CD8-positive, alpha-beta T cell (primary cell): ENCODE measurements at regions of chr1 and their contacts with region 1.

Region 1: DNA sequence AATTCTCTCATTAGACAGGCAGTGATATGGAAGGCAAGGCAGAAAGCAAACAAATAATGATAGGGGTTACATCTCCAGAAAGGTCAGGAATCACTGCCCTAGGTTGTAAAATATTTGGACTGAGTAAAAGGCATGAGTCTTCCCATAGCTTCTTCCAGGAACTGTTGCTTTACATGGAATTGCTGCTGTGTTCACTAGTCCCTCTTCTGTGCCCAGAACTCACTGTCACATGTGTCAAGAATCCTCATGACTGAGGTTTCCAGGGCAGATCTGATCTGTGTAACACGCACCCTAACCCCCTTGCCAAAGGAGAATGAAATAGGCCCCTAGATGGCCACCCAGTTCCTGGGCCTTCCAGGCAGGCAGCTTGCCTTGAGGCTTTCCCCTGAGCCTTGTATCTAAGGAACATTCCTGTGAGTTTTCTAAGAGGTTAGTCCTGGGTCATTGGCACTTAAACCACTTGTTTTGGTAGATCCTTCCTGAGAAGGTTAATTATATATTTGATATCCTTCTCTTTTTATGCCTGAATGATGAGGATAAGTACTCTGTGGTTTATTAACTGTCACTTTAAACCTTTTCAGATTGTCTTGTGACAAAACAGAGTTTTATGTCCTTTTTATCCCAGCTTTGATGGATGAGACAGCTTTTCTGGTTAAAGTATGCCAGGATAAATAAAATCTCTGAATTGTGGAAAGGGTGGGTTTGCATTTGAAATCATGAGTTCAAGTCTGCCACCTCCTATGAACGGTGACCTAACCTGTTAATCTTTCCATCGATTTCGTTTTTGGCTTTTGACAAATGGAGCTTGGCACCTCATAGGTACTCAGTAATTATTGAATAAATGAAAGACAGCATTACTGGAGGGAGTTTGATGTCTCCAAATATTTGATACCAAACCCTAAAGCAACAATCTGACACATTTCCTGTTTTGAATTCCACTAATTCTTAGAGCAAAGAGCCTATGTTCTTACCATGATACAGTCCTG is 163.3 kb downstream of the DHRS3 start:
- DNase-seq: no peak
- ATAC-seq: no peak
- H3K4me3 ChIP-seq: no peak overlapping the region
- H3K4me3 Mint-ChIP-seq: peak overlapping the region; percentile 19
- H3K27ac ChIP-seq: no peak overlapping the region
- H3K27ac Mint-ChIP-seq: peak overlapping the region; percentile 90
- H3K4me1 ChIP-seq: peaks cover 88% of the 10 kb centered on the region
- H3K4me1 Mint-ChIP-seq: peaks cover 86% of the 10 kb centered on the region
- H3K27me3 ChIP-seq: no peaks in the 10 kb centered on the region
- H3K27me3 Mint-ChIP-seq: no peaks in the 10 kb centered on the region
- CTCF ChIP-seq: no peak

Region 2: GRCh38 chr1:12415038-12415466 is 39.6 kb before region 1 on chr1:
- CTCF ChIA-PET with region 1: no interaction called
- POLR2A ChIA-PET with region 1: no interaction called
- intact Hi-C with region 1: loop called in 1 of 2 experiments (anchors 5 kb)
- DNase-seq: peak in 1 of 9 experiments; percentile 14
- ATAC-seq: no peak
- H3K4me3 ChIP-seq: no peak overlapping the region
- H3K4me3 Mint-ChIP-seq: no peak overlapping the region
- H3K27ac ChIP-seq: no peak overlapping the region
- H3K27ac Mint-ChIP-seq: peak overlapping the region; percentile 37
- H3K4me1 ChIP-seq: peaks cover 10% of the 10 kb centered on the region
- H3K4me1 Mint-ChIP-seq: peaks cover 25% of the 10 kb centered on the region
- H3K27me3 ChIP-seq: no peaks in the 10 kb centered on the region
- H3K27me3 Mint-ChIP-seq: no peaks in the 10 kb centered on the region
- CTCF ChIP-seq: no peak